HEK293 (cell line): ENCODE measurements at regions of chr3 and their contacts with region 1.

Region 1: DNA sequence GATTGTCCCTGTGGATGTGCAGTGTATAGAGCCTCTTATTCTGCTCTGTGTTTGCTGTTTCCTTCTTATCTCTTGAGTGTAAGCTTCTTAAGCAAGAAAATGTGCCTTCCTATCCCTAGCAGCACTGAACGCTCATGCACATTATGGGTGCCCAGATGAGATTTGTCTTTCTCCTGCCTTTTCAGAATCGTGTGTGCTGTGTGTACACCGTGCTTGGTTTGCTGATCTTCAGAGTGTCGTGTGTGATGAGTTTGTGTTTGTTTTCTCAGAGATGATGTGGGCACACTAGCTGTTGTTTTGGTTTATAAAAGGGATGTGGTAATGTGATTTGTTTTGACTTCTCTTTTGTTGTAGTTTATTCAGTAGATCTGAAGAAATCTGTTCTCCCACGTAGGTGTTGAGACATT is 19.7 kb downstream of the GPR171 start:
- H3K4me3 ChIP-seq: no peak overlapping the region
- H3K27ac ChIP-seq: no peak overlapping the region
- H3K4me1 ChIP-seq: 0 out of 2 replicates have a peak, but pooled peaks cover 3% of the 10 kb centered on the region
- CTCF ChIP-seq: no peak

Region 2: DNA sequence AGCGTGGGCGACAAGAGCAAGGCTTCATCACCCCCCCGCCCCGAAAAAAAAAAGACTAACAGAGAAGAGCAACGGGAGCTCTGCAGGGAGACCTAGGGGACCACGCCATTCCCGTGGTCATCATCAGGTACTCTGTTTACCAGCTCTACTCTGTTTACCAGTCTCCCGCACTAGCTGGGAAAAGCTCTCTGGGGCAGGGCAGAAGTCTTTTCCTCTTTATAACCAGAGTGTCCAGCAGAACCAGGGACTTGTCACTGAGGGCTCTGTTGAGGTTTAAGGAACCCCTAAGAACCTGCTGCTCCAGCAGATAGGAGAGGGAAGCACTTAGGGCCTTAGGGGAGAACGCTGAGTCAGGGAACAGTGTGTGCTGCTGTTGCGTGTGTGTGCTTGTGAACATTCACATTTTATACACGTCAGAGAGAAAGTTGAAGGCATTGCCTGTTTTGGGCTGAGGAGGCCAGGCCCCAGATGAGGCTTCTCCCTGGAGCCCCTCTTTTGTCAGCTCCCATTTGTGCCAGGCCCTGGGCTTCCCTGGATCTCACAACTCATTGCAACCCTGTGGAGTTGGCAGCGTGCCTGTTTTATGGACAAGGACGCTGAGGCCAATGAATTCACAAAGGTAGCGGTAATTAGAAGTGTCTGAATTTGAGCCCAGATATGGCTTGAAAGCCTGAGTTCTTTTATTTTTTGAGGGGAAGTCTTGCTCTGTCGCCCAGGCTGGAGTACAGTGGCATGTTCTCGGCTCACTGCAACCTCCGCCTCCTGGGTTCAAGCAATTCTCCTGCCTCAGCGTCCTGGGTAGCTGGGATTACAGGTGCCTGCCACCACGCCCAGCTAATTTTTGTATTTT is 455.4 kb before region 1 on chr3:
- CTCF ChIA-PET with region 1: no interaction called
- POLR2A ChIA-PET with region 1: no interaction called
- H3K4me3 ChIP-seq: no peak overlapping the region
- H3K27ac ChIP-seq: no peak overlapping the region
- H3K4me1 ChIP-seq: no peaks in the 10 kb centered on the region; the same call in 1 of the 2 replicates
- CTCF ChIP-seq: no peak

Region 3: DNA sequence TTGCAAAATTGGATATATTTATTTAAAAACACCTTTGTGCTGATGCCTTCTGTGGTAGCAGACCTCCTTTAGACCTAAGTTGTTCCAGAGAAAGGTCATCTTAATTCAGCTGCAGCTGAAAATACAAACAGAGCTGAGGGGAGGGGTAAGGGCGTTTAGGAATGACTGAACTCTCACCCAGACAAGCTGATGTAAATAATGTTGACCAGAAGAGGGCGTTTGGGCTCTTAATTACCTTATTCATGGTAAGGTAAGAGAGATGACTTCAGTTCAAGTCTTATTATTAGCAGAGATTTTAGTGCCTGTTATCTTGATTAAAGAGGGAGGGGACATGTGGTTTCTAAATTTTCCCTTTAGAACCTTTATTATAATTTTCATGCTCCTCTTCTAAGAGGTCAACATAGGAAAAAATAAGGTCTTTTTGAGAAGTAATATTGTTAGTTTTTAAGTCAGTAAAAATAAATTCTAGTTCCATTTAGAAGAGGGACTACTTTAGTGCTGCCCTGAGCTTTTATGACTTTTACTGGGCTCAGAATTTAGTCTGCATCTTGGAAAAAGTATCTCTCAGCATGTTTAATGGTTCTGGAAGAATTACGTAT is 26.6 kb before region 1 on chr3:
- CTCF ChIA-PET with region 1: no interaction called
- POLR2A ChIA-PET with region 1: no interaction called
- H3K4me3 ChIP-seq: no peak overlapping the region
- H3K27ac ChIP-seq: no peak overlapping the region
- H3K4me1 ChIP-seq: no peaks in the 10 kb centered on the region
- CTCF ChIP-seq: no peak

Region 4: GRCh38 chr3:151168269-151169094 is 14.8 kb before region 1 on chr3:
- CTCF ChIA-PET with region 1: interaction called, 10 read pairs
- POLR2A ChIA-PET with region 1: no interaction called
- H3K4me3 ChIP-seq: no peak overlapping the region
- H3K27ac ChIP-seq: no peak overlapping the region
- H3K4me1 ChIP-seq: no peaks in the 10 kb centered on the region
- CTCF ChIP-seq: peak; percentile 46; the same call in 1 of the 2 replicates

Region 5: GRCh38 chr3:151538456-151539393 is 355.5 kb after region 1 on chr3:
- CTCF ChIA-PET with region 1: no interaction called
- POLR2A ChIA-PET with region 1: no interaction called
- H3K4me3 ChIP-seq: no peak overlapping the region
- H3K27ac ChIP-seq: no peak overlapping the region
- H3K4me1 ChIP-seq: no peaks in the 10 kb centered on the region
- CTCF ChIP-seq: no peak